ENCODE measurements at regions of chr15 and their contacts with region 1.

Region 1: DNA sequence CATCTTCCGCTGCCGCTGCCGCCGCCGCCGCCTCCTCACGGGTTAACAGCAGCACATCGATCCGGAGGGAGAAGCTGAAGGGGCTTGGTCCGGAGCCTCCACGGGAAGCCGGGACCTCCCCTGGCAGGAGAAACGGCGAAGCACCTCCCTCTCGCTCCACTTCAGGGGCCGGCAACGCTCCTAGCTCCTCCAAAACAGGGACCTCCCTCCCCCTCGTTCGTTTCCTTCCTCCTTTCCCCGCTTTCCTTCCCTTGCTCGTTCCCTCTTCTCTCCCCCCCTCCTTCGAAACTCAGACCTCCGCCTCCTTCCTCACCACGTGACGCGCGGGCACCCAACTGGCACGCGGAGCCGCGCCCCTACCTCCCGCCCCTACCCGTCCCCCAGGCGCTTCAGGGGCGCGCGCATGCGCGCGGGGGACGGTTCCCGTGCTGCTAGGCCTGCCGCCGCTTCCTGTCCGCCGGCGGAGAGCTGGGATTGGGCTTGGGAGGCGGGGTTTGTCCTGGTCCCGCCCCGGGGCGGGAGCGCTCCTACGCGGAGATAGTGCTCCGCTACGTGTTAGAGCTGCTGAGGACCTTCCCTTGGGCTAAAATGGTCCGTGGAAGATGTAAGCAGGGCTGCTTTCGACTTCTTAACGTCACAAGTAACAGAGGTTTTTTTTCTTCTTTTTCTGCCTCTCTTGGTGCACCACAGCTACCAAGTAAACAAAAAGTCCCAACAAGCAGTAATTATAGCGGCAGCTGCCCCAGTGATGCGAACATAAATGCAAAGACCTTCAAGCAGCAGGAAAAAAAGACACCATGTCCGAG is at the start of gene ADAM10:
- DNase-seq: peak; percentile 97 to 99
- H3K4me3 ChIP-seq: peak within 1 kb of the TSS; percentile 94 to 97
- H3K27ac ChIP-seq: peak within 1 kb of the TSS; percentile 98
- H3K4me1 ChIP-seq: peaks cover 0 to 13% of the 10 kb centered on the region in 2 donors
- H3K27me3 ChIP-seq: no peaks in the 10 kb centered on the region
- CTCF ChIP-seq: no peak
- total RNA-seq, gene ADAM10: 44.6 TPM

Region 2: GRCh38 chr15:58227706-58228543 is 521.8 kb before region 1 on chr15:
- intact Hi-C with region 1: loop called (anchors 2 kb)
- DNase-seq: peak in 1 of 2 donors; percentile 83
- H3K4me3 ChIP-seq: no peak overlapping the region
- H3K27ac ChIP-seq: peak overlapping the region in 1 of 2 donors; percentile 38
- H3K4me1 ChIP-seq: peaks cover 0 to 12% of the 10 kb centered on the region in 2 donors
- H3K27me3 ChIP-seq: no peaks in the 10 kb centered on the region
- CTCF ChIP-seq: peak; percentile 67 to 80 (median 78)

Region 3: GRCh38 chr15:58440158-58440910 is 309.4 kb before region 1 on chr15:
- intact Hi-C with region 1: loop called (anchors 2 kb)
- DNase-seq: peak in 1 of 2 donors; percentile 65
- H3K4me3 ChIP-seq: no peak overlapping the region
- H3K27ac ChIP-seq: peak overlapping the region; percentile 61 to 68
- H3K4me1 ChIP-seq: peaks cover 6 to 18% of the 10 kb centered on the region in 2 donors
- H3K27me3 ChIP-seq: no peaks in the 10 kb centered on the region
- CTCF ChIP-seq: no peak

Region 4: GRCh38 chr15:58933281-58934113 is 183.8 kb after region 1 on chr15 and contains the start of gene SLTM:
- intact Hi-C with region 1: loop called (anchors 1 kb)
- DNase-seq: peak; percentile 73 to 98
- H3K4me3 ChIP-seq: peak within 1 kb of the TSS; percentile 83 to 92
- H3K27ac ChIP-seq: peak within 1 kb of the TSS; percentile 98
- H3K4me1 ChIP-seq: peaks cover 0 to 13% of the 10 kb centered on the region in 2 donors
- H3K27me3 ChIP-seq: no peaks in the 10 kb centered on the region
- CTCF ChIP-seq: peak in 2 of 3 experiments; percentile 20 to 24
- total RNA-seq, gene SLTM: 109 TPM

Measured in ascending aorta (tissue), 2 donors.